Dorsolateral prefrontal cortex (tissue), 120 donors: ENCODE measurements at regions of chr7 and their contacts with region 1.

Region 1: GRCh38 chr7:127253281-127254162 is 781 bp upstream of the GRM8 start:
- DNase-seq: peak; percentile 53 to 85 (median 65)
- H3K4me3 ChIP-seq: peak overlapping the region; percentile 56 to 97 (median 77)
- H3K27ac ChIP-seq: peak overlapping the region in 43 of 59 donors; percentile 2 to 76 (median 52)
- H3K27me3 ChIP-seq: peaks cover 0 to 6% (median 0%) of the 10 kb centered on the region in 45 donors
- CTCF ChIP-seq: peak in 55 of 56 donors; percentile 50 to 97 (median 91)

Region 2: DNA sequence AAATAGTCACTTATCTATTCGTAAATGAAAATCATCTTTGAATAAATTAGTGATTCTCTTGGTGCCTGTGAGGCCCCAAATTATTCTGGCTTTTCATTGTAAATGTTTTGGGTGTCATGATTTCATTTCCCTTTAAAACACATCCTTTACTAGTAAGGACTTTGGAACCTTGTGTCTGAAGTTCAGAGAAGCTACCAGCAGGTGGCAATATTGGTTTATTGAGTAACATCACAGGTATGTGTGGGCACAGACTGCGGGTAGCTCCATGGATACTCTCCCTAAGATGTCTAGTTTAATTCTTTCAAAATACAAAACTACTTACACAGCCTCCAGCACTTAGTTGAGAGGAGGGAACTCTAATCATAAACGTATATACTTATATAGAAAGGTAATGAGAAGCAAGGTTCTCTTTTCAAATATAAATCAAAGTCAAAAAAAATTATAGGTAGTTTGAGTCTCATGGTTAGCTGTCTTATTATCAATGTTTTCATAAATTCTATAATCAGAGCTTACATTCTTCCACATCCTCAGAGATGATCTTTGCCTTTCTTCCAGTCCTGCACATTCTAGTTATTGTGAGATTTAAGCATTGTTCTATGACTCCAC is 450.4 kb before region 1 on chr7:
- intact Hi-C with region 1: loop called in 1 of 2 experiments (anchors 5 kb)
- DNase-seq: peak in 1 of 10 donors; percentile 30
- H3K4me3 ChIP-seq: peak overlapping the region in 1 of 59 donors; percentile 4
- H3K27ac ChIP-seq: no peak overlapping the region
- H3K27me3 ChIP-seq: no peaks in the 10 kb centered on the region
- CTCF ChIP-seq: peak in 55 of 56 donors; percentile 48 to 78 (median 66)

Region 3: DNA sequence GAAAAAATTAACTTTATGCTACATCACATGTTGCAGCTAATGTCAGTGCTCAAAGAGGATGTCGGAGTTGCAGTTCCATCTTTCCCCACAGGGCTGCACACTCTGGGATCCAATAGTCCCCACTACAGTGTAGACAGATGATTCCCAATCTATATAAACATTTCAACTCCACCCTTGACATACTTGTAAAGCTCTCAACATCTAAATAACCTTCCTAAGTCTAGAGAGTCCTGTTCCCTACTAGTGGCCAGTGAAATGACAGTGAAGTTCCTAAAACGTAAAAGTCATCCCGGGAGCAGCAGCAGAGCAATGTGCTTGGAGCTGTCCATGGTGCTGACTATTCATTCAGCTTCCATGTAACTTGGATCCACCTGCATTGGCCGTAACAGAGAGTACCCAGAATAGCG is 145.9 kb before region 1 on chr7:
- intact Hi-C with region 1: loop called (anchors 5 to 10 kb)
- DNase-seq: peak in 1 of 10 donors; percentile 33
- H3K4me3 ChIP-seq: no peak overlapping the region
- H3K27ac ChIP-seq: no peak overlapping the region
- H3K27me3 ChIP-seq: peaks cover 0 to 5% (median 0%) of the 10 kb centered on the region in 45 donors
- CTCF ChIP-seq: peak; percentile 30 to 79 (median 56)

Region 4: DNA sequence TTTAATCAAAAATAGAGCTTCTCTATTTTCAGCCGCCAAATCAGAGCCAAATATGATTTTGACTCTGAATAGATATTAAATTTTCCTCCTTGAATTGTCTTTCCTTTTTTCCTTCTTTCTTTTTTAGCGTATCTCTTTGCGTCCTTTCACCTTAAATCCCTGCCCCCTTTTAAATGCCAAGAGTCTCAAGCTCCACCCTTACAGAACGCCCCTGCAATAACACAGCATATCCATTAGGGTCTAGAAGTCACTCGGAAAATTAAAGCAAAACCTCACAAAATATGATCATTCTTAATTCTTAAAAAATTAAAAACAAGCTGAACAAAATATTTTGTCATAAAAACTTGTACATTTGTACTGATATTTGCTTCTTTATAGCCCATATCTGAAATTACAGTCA is 50.6 kb after region 1 on chr7:
- intact Hi-C with region 1: no loop called
- DNase-seq: no peak
- H3K4me3 ChIP-seq: no peak overlapping the region
- H3K27ac ChIP-seq: no peak overlapping the region
- H3K27me3 ChIP-seq: no peaks in the 10 kb centered on the region
- CTCF ChIP-seq: no peak

Region 5: DNA sequence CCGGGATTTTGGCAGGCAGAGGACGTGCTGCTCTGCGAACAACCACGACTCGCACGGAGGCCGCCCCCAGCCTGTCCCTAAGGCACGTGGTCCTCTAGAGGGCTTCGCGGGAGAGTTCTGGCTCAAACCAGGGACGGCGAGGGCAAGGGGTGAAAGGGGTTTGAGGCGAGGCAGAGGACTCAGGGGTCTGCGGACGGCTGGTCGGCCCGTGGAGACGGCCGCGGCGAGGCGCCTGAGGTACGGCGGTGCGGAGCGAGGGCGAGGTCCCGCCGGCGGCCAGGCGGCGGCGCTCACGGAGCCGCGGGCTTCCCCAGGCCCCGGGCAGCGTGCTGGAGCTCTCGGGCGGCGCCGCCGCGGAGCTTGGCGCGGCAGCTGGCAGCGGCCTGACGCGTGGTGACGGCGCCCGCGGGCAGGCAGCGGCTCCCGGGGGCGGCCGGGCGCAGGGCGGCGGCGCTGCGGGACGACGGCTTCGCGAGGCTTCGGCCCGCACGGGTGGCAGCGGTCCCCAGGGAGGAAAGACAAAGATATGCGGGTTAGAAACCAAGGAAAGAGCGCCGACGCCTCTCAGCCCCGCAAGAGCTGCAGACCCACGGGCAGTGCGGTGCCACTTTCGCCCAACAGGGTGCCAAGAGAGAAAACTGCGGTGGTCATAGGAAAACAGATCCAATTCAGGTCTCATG is 94.2 kb after region 1 on chr7:
- intact Hi-C with region 1: loop called in 1 of 2 experiments (anchors 5 kb)
- DNase-seq: peak; percentile 11 to 65 (median 36)
- H3K4me3 ChIP-seq: peak overlapping the region in 54 of 59 donors; percentile 9 to 61 (median 44)
- H3K27ac ChIP-seq: no peak overlapping the region
- H3K27me3 ChIP-seq: no peaks in the 10 kb centered on the region
- CTCF ChIP-seq: peak in 47 of 56 donors; percentile 4 to 67 (median 40)

Region 6: DNA sequence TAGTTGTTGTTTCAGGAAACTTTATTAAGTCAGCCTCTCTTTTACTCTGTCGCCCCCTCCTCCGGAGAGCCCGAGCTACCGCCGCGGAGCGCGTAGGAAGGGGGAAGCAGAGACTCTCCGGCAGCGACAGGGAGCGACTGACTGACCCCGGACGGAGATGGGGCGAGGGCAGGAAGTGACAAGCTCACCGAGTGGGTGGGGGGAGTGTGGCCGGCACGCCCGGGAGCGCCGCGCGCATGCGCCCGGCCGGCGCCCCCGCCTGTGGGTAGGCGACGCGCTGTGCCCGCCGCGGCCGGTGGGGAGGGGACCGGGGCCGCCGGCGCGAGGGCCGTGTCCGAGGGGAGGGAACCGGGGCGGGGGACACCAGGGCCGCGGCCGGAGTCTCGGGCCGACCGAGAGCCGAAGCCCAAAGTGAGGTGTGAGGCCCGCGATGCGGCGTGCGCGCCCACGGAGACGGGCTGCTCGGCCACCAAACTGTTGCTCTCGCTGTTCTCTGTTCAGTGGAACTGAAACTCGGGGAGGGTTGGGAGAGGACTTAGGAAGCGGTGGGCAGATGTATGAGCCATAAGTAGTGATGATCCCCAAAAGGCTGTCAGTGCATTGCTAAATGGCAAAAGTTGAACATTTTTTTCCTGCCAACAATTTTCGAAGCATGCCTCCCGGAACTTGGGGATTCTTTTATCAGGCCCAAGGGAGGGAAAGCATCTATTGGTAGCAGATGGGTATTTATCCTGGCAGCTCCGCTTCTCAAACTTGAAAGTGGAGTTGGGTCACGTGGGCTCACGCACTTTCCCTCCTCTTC is 139.2 kb after region 1 on chr7 and contains the start of gene ZNF800:
- intact Hi-C with region 1: loop called (anchors 2 to 5 kb)
- DNase-seq: peak; percentile 77 to 94 (median 91)
- H3K4me3 ChIP-seq: peak within 1 kb of the TSS; percentile 61 to 100 (median 96)
- H3K27ac ChIP-seq: peak within 1 kb of the TSS; percentile 42 to 97 (median 93)
- H3K27me3 ChIP-seq: no peaks in the 10 kb centered on the region
- CTCF ChIP-seq: peak in 14 of 56 donors; percentile 4 to 34 (median 14)
- total RNA-seq, gene ZNF800: 34.6 to 62.9 (median 48.6) TPM

Region 7: GRCh38 chr7:127585044-127585953 is 331.8 kb after region 1 on chr7 and contains the start of gene GCC1:
- intact Hi-C with region 1: loop called in 1 of 2 experiments (anchors 5 kb)
- DNase-seq: peak; percentile 90 to 97 (median 93)
- H3K4me3 ChIP-seq: peak within 1 kb of the TSS; percentile 64 to 100 (median 95)
- H3K27ac ChIP-seq: peak within 1 kb of the TSS in 57 of 59 donors; percentile 21 to 94 (median 82)
- H3K27me3 ChIP-seq: no peaks in the 10 kb centered on the region
- CTCF ChIP-seq: peak in 16 of 56 donors; percentile 1 to 42 (median 20)
- total RNA-seq, gene GCC1: 9.6 to 17.6 (median 12.6) TPM